ENCODE measurements at regions of chr9 and their contacts with region 1.

Region 1: DNA sequence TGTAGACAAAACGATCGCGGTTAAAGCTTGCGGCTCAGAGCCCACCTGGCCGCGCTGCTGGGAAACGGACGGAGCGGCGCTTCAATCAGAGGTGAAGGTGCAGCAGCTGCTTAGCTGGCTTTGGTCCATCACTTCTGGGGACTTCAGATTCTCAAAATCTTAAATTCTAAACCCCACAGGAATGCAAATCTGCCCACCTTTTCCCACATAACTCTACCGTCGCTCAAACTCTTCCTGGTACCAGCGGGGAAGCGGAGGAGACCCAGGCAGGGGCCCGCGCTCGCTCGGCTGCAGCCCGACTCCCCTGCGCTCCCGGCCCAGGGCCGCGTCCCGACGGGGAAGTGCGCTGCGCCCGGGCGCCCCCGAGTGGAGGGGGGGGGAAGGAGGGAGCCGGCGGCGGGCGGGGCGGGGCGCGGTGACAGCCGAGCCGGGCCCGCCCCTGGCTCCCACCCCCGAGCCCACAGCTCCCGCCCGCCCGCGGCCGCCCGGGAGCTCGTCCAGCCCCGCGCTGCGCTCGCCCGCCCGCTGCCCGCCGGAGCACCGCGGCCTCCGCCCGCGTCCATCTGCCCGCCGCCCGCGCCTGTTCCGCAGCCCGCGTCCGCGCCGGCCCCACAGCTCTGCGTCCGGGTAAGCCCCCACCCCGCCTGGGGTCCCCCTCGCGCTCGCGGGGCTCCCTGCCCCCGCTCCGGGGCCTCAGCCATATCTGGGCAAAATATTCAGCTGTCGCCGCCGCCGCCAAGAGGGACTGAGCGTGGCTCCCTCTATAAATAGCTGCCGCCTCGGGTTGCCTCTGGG is at the start of gene TMOD1:
- DNase-seq: peak; percentile 69
- H3K4me3 Mint-ChIP-seq: peak within 1 kb of the TSS; percentile 58
- H3K27ac Mint-ChIP-seq: no peak within 1 kb of the TSS
- H3K4me1 Mint-ChIP-seq: peaks cover 9% of the 10 kb centered on the region
- H3K27me3 Mint-ChIP-seq: no peaks in the 10 kb centered on the region
- CTCF ChIP-seq: no peak
- total RNA-seq, gene TMOD1: 0.14 and 0.15 TPM in 2 replicates

Region 2: GRCh38 chr9:97411789-97412625 is 89.4 kb before region 1 on chr9 and contains the start of gene TDRD7:
- CTCF ChIA-PET with region 1: interaction called, 10 read pairs
- intact Hi-C with region 1: no loop called
- DNase-seq: peak; percentile 81
- H3K4me3 Mint-ChIP-seq: peak within 1 kb of the TSS; percentile 80
- H3K27ac Mint-ChIP-seq: peak within 1 kb of the TSS; percentile 69
- H3K4me1 Mint-ChIP-seq: peaks cover 27% of the 10 kb centered on the region
- H3K27me3 Mint-ChIP-seq: no peaks in the 10 kb centered on the region
- CTCF ChIP-seq: peak; percentile 91
- total RNA-seq, gene TDRD7: 15.5 and 21.7 TPM in 2 replicates

Region 3: DNA sequence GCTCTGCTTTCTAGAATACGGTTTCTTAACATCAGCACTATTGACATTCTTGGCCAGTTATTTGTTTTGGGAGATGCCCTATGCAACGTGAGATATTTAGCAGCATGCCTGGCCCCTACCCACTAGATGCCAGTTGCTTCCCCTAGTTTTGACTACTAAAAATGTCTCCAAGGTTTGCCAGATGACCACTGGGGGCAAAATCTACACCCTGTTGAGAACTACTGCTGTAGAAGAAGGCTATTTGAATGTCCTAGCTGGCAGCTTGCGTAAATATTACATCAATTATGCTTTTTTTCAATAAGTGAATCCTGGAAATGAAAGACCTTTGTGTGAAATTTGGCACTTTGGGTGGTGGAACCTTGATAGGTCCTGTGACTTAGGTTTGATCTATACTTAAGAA is 137.3 kb after region 1 on chr9:
- CTCF ChIA-PET with region 1: no interaction called
- intact Hi-C with region 1: no loop called
- DNase-seq: no peak
- H3K4me3 Mint-ChIP-seq: no peak overlapping the region
- H3K27ac Mint-ChIP-seq: no peak overlapping the region
- H3K4me1 Mint-ChIP-seq: peaks cover 20% of the 10 kb centered on the region
- H3K27me3 Mint-ChIP-seq: no peaks in the 10 kb centered on the region
- CTCF ChIP-seq: no peak

Measured in Calu3 (cell line).